Ascending aorta (tissue), 2 donors: ENCODE measurements at regions of chr20 and their contacts with region 1.

Region 1: DNA sequence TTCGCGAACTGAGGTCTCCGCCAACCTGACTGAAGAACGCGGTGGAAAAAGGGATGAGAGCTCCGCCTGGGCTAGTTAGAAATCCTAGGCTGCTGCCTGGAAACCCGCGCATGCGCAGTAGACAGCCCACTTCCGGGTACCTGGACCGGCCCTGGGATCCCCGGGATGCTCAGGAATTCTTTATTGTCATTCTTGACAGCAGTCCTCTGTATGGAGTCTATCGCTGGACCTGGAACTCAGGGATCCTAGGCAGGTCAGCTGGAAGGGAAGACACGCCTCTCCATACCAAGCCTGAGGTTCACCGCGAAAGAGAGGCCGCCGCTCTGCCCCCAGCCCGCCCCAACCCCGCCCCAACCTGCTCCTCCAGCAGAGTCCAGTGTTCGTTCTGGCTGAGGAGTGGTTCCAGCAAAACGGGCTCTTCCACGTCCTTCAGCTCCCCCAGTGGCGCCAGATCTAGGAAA is 1379.2 kb upstream of the DEFB115 start:
- DNase-seq: no peak
- H3K4me3 ChIP-seq: no peak overlapping the region
- H3K27ac ChIP-seq: no peak overlapping the region
- H3K4me1 ChIP-seq: no peaks in the 10 kb centered on the region
- H3K27me3 ChIP-seq: no peaks in the 10 kb centered on the region
- CTCF ChIP-seq: no peak

Region 2: GRCh38 chr20:29123861-29124260 is 754.5 kb before region 1 on chr20:
- intact Hi-C with region 1: loop called (anchors 5 kb)
- DNase-seq: no peak
- H3K4me3 ChIP-seq: no peak overlapping the region
- H3K27ac ChIP-seq: no peak overlapping the region
- H3K4me1 ChIP-seq: no peaks in the 10 kb centered on the region
- H3K27me3 ChIP-seq: no peaks in the 10 kb centered on the region
- CTCF ChIP-seq: no peak